ENCODE measurements at regions of chr17 and their contacts with region 1.

Region 1: DNA sequence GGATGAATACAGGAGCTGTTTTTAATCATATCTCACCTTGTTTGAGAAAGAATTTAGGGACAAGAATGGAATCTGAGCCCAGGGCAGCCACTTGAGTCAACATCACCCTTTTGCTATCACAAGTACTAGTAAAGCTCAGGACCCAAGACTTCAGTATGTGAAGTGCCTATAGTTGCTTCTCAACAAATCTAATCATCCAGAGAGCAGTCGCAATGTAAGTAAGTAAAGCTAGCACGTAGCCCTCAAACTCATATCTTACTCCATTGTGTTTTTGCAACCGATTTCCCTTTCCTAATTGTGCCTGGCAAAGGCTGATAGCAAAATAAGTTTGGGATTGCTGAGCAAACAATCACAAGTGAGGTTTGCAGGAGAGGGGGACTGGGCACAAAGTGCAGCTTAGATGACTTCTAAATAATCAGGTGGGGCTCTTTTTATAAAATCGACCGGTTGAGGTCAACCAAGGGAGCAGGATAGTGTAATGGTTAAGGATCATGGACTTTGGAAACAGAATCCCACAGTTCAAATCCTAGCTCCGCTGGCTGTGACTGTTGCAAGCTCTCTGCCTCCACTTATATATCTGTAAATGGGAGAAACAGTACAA is 13.0 kb downstream of the TOB1 start:
- DNase-seq: no peak
- ATAC-seq: no peak
- H3K4me3 Mint-ChIP-seq: no peak overlapping the region
- H3K27ac Mint-ChIP-seq: peak overlapping the region; percentile 76
- H3K4me1 Mint-ChIP-seq: peaks cover 14% of the 10 kb centered on the region
- H3K27me3 Mint-ChIP-seq: no peaks in the 10 kb centered on the region
- CTCF ChIP-seq: no peak

Region 2: GRCh38 chr17:50707289-50708049 is 145.6 kb before region 1 on chr17 and contains the start of gene ANKRD40:
- CTCF ChIA-PET with region 1: no interaction called
- POLR2A ChIA-PET with region 1: no interaction called
- intact Hi-C with region 1: no loop called
- DNase-seq: peak; percentile 91
- ATAC-seq: peak; percentile 82
- H3K4me3 Mint-ChIP-seq: peak within 1 kb of the TSS; percentile 95
- H3K27ac Mint-ChIP-seq: peak within 1 kb of the TSS; percentile 96
- H3K4me1 Mint-ChIP-seq: peaks cover 38% of the 10 kb centered on the region
- H3K27me3 Mint-ChIP-seq: no peaks in the 10 kb centered on the region
- CTCF ChIP-seq: no peak
- total RNA-seq, gene ANKRD40: 39.0 and 40.3 TPM in 2 replicates

Region 3: GRCh38 chr17:50783193-50783660 is 69.9 kb before region 1 on chr17:
- CTCF ChIA-PET with region 1: interaction called, 3 read pairs
- POLR2A ChIA-PET with region 1: no interaction called
- intact Hi-C with region 1: loop called (anchors 2 kb)
- DNase-seq: peak; percentile 76
- ATAC-seq: peak; percentile 99
- H3K4me3 Mint-ChIP-seq: no peak overlapping the region
- H3K27ac Mint-ChIP-seq: no peak overlapping the region
- H3K4me1 Mint-ChIP-seq: peaks cover 6% of the 10 kb centered on the region
- H3K27me3 Mint-ChIP-seq: peaks cover 9% of the 10 kb centered on the region
- CTCF ChIP-seq: peak; percentile 88

Region 4: GRCh38 chr17:50956750-50957523 is 103.8 kb after region 1 on chr17:
- CTCF ChIA-PET with region 1: interaction called, 113 read pairs
- POLR2A ChIA-PET with region 1: interaction called, 9 read pairs
- intact Hi-C with region 1: loop called (anchors 1 kb)
- DNase-seq: peak; percentile 45
- ATAC-seq: peak; percentile 92
- H3K4me3 Mint-ChIP-seq: no peak overlapping the region
- H3K27ac Mint-ChIP-seq: no peak overlapping the region
- H3K4me1 Mint-ChIP-seq: peaks cover 2% of the 10 kb centered on the region
- H3K27me3 Mint-ChIP-seq: no peaks in the 10 kb centered on the region
- CTCF ChIP-seq: no peak

Region 5: GRCh38 chr17:51000835-51001638 is 147.9 kb after region 1 on chr17:
- CTCF ChIA-PET with region 1: interaction called, 13 read pairs
- POLR2A ChIA-PET with region 1: no interaction called
- intact Hi-C with region 1: no loop called
- DNase-seq: no peak
- ATAC-seq: peak; percentile 67
- H3K4me3 Mint-ChIP-seq: no peak overlapping the region
- H3K27ac Mint-ChIP-seq: no peak overlapping the region
- H3K4me1 Mint-ChIP-seq: no peaks in the 10 kb centered on the region
- H3K27me3 Mint-ChIP-seq: no peaks in the 10 kb centered on the region
- CTCF ChIP-seq: no peak

Region 6: GRCh38 chr17:51153210-51154072 is 300.3 kb after region 1 on chr17 and contains the start of gene NME1:
- CTCF ChIA-PET with region 1: interaction called, 12 read pairs
- POLR2A ChIA-PET with region 1: no interaction called
- intact Hi-C with region 1: loop called (anchors 2 kb)
- DNase-seq: peak; percentile 99
- ATAC-seq: peak; percentile 88
- H3K4me3 Mint-ChIP-seq: no peak within 1 kb of the TSS
- H3K27ac Mint-ChIP-seq: no peak within 1 kb of the TSS
- H3K4me1 Mint-ChIP-seq: peaks cover 7% of the 10 kb centered on the region
- H3K27me3 Mint-ChIP-seq: no peaks in the 10 kb centered on the region
- CTCF ChIP-seq: no peak
- total RNA-seq, gene NME1: 130 and 138 TPM in 2 replicates

Measured in activated B cell treated with CpG ODN at 0.5 μM for 24 hours (primary cell).